ENCODE measurements at regions of chr17 and their contacts with region 1.

Region 1: GRCh38 chr17:50269477-50270434 is 4.5 kb upstream of the TMEM92 start:
- DNase-seq: peak; percentile 75 to 89 (median 81)
- H3K4me3 ChIP-seq: no peak overlapping the region
- H3K27ac ChIP-seq: peak overlapping the region; percentile 42 to 92
- H3K4me1 ChIP-seq: peaks cover 45% of the 10 kb centered on the region
- H3K27me3 ChIP-seq: no peaks in the 10 kb centered on the region
- CTCF ChIP-seq: peak; percentile 65 to 86 (median 82)
- EP300 ChIP-seq: no peak
- POLR2A ChIP-seq: no peak

Region 2: GRCh38 chr17:48878918-48879898 is 1390.5 kb before region 1 on chr17:
- intact Hi-C with region 1: no loop called
- DNase-seq: peak in 2 of 5 donors; percentile 34 to 57
- H3K4me3 ChIP-seq: no peak overlapping the region
- H3K27ac ChIP-seq: no peak overlapping the region
- H3K4me1 ChIP-seq: no peaks in the 10 kb centered on the region
- H3K27me3 ChIP-seq: no peaks in the 10 kb centered on the region
- CTCF ChIP-seq: peak; percentile 61 to 82 (median 80)
- EP300 ChIP-seq: no peak
- POLR2A ChIP-seq: no peak

Region 3: GRCh38 chr17:50094753-50095619 is 174.8 kb before region 1 on chr17 and contains the start of gene PDK2:
- intact Hi-C with region 1: loop called in 1 of 4 experiments (anchors 10 kb)
- DNase-seq: peak; percentile 96 to 98 (median 96)
- H3K4me3 ChIP-seq: peak within 1 kb of the TSS; percentile 98
- H3K27ac ChIP-seq: peak within 1 kb of the TSS; percentile 42 to 72
- H3K4me1 ChIP-seq: peaks cover 6% of the 10 kb centered on the region
- H3K27me3 ChIP-seq: no peaks in the 10 kb centered on the region
- CTCF ChIP-seq: no peak
- EP300 ChIP-seq: no peak
- POLR2A ChIP-seq: no peak
- total RNA-seq, gene PDK2: 36.5 to 83.2 (median 54.7) TPM

Region 4: DNA sequence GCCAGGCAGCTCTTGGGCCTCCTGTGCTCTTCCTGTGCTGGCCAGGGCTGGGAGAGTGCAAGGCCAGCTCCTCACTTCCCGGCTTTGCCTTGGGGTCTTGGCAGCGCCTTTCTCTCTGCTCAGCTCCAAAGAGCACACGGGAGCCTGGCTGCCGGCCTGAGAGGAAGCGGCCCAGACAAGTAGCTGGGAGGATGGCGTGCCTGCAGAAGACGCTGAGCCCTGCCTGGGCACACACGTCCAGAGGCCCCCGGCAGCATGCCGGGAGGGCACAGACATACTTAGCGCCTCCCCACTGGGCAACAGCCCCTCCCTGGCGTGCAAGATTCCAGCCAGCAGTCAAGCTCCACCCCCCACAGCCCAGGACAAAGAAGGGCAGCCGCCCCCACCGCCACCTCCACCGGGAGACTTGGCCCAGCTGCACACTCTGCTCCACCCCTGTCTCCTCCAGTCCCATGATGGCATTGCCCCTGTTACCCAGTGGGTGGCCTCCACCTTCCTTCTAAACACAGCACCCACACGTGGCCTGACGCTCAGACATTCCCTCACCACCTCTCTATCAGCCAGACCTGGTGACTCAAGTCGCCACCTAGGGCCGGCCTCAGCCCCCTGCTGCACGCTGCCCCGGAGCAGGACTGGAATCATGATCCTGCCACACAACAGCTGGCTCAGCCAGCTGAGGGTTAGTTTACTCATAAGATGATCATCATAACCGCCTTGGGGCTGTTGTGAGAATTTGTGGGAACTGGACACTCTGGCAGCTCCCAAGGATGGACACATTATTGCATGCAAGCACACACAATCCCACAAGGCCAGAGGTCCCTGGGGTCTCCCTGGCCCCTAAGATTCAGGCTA is 91.5 kb before region 1 on chr17:
- intact Hi-C with region 1: loop called in 1 of 4 experiments (anchors 10 kb)
- DNase-seq: peak; percentile 73 to 87 (median 82)
- H3K4me3 ChIP-seq: no peak overlapping the region
- H3K27ac ChIP-seq: peak overlapping the region in 1 of 2 donors; percentile 81
- H3K4me1 ChIP-seq: peaks cover 26% of the 10 kb centered on the region
- H3K27me3 ChIP-seq: no peaks in the 10 kb centered on the region
- CTCF ChIP-seq: peak in 2 of 3 donors; percentile 19 to 24
- EP300 ChIP-seq: no peak
- POLR2A ChIP-seq: no peak

Region 5: GRCh38 chr17:50200457-50201275 is 69.1 kb before region 1 on chr17:
- intact Hi-C with region 1: loop called (anchors 1 to 2 kb)
- DNase-seq: peak; percentile 94 to 98 (median 96)
- H3K4me3 ChIP-seq: peak overlapping the region; percentile 70
- H3K27ac ChIP-seq: peak overlapping the region; percentile 82 to 95
- H3K4me1 ChIP-seq: peaks cover 20% of the 10 kb centered on the region
- H3K27me3 ChIP-seq: no peaks in the 10 kb centered on the region
- CTCF ChIP-seq: peak; percentile 99 to 100 (median 100)
- EP300 ChIP-seq: no peak
- POLR2A ChIP-seq: peak; percentile 38

Region 6: DNA sequence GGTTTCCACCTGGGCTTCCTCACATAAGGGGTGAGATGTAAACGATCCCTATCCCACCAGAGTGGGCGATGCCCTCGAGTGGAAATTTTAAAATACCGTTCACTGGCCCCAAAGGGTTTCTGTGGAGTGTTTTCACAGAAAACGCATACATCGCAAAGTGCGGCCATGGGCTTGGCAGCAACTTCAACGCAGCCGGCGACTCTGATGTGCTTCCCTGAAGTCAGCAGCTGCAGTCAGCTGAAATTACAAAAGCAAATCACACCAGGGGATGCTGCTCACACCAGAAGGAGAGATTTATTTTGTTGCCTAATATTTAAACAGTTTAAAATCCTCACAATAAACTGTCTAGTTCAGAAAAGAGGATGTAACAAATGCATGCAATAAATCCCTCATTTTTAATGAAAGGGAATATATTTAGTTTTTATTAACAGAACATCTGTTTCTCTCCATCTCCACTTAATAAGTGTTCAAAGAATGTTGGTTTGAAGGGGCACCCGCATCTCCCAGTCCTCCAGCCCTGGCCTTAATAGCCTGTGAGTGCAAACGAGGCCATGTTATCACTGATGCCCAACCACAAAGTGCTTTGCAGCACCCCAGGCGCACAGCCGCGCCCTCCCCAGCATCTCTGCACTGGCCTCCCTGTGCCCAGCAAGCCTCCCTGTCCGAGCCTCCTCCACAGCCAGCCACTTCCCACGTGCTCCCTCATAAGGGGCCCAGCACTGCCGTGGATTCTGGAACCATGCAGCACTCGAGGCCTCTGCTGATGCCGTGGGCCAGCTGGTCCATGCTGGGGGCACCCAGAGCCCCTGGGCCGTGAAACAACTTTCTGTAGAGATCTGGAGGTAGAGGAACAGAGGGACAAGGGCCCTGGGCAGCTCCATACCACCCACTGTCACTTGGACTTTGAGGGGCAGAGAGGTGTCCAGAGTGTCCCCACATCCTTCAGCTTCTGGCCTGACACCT is 58.9 kb after region 1 on chr17:
- intact Hi-C with region 1: no loop called
- DNase-seq: no peak
- H3K4me3 ChIP-seq: no peak overlapping the region
- H3K27ac ChIP-seq: no peak overlapping the region
- H3K4me1 ChIP-seq: no peaks in the 10 kb centered on the region
- H3K27me3 ChIP-seq: no peaks in the 10 kb centered on the region
- CTCF ChIP-seq: no peak
- EP300 ChIP-seq: no peak
- POLR2A ChIP-seq: no peak